PC-3 (cell line): ENCODE measurements at regions of chr11 and their contacts with region 1.

Region 1: DNA sequence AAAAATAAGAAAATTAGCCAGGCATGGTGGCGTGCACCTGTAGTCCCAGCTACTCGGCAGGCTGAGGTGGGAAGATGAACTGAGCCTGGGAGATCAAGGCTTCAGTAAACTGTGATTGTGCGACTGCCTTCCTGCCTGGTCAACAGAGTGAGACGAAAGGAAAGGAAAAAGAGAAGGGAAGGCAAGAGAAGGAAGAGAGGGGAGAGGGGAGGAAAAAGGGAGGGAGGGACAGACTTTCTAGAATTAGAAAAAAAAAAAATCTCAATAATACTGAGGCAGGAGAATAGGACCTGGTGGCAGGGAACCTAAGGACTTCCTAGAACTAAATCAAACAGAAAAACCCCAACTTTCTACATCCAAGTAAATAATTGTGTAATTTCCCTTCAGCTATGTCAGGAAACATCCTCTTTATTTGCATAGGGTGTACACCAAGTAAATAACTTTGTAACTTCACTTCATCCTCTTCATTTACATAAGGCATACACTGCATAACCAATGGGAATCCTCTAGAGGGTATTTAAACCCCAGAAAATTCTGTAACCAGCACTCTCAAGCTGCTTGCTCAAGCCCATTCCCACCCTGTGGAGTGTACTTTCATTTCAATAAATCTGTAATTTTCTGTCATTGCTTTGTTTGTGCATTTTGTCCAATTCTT is 8.7 kb downstream of the SBF2 start:
- DNase-seq: peak; percentile 32
- ATAC-seq: peak; percentile 86
- H3K4me3 ChIP-seq: peak overlapping the region; percentile 11; the same call in 1 of the 2 replicates
- H3K27ac ChIP-seq: no peak overlapping the region
- H3K4me1 ChIP-seq: peaks cover 11% of the 10 kb centered on the region
- H3K27me3 ChIP-seq: no peaks in the 10 kb centered on the region
- CTCF ChIP-seq: no peak

Region 2: DNA sequence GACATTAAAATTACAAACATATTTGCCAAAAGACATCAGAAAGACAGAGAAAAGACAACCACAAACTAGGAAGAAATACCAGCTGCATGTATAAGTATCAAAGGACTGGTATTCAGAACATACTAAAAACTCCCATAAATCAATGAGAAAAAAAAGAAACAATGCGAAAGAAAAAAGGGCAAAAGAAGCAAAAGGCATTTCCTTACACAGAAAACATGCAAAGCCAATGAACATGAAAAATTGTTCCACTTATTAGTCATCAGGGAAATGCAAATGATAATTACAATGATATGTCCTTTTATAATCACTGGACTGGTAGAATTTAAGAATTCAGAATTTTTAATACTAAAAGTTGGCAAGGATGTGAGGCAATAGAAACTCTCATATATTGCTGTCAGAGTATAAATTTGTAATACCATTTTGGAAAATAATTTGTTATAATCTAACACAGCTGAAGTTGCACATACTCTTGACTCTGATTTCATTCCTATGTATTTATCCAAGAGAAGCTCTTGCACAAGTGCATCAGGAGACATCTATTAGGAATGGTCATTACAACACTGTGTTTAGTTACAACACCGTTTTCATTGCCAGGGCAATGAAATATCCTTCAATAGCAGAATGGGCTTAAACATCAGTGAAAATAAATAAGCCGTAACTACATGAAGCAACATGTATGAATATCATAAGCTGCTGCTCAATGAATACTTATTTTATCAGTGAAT is 341.7 kb before region 1 on chr11:
- CTCF ChIA-PET with region 1: no interaction called
- POLR2A ChIA-PET with region 1: no interaction called
- intact Hi-C with region 1: no loop called
- DNase-seq: no peak
- ATAC-seq: no peak
- H3K4me3 ChIP-seq: no peak overlapping the region
- H3K27ac ChIP-seq: no peak overlapping the region
- H3K4me1 ChIP-seq: no peaks in the 10 kb centered on the region
- H3K27me3 ChIP-seq: no peaks in the 10 kb centered on the region
- CTCF ChIP-seq: no peak

Region 3: DNA sequence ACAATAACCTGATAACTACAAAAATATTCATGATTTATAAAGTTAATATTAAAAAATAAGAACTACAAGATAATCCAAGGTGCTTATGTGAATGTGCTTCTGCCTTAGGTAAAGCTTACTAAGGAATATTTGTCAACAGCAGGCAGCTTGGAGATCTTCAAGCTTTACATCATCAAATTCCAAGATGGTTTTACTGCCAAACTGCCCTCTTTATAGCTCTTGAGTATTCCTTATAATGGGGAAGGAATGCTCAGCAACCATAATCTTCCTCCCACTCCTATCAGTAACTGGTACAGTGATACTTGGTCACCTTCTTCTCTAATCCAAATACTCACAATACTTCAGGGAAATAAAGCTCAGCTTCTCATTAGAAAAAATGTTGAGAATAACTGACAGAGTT is 21.3 kb before region 1 on chr11:
- CTCF ChIA-PET with region 1: no interaction called
- POLR2A ChIA-PET with region 1: interaction called, 11 read pairs
- intact Hi-C with region 1: no loop called
- DNase-seq: peak; percentile 34
- ATAC-seq: no peak; the same call in 1 of the 2 replicates
- H3K4me3 ChIP-seq: no peak overlapping the region
- H3K27ac ChIP-seq: no peak overlapping the region
- H3K4me1 ChIP-seq: peaks cover 9% of the 10 kb centered on the region
- H3K27me3 ChIP-seq: no peaks in the 10 kb centered on the region
- CTCF ChIP-seq: no peak

Region 4: DNA sequence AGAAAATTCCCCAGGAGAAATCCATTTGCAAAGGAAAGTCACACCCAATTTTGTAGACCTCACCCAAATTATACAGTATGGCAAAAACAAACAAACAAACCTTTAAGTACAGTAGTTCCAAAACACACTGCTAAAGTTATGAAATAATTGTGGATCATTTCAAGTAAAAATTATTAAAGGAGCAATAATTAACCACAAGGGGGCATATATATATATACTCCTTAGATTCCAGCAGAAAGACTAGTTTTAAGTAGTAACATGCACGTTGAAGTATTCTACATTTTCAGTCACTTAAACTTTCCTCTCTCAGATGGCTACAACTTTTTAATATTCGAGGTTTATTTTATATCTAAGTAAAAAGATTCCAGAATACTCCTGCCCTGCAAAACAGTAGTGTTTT is 228.9 kb after region 1 on chr11:
- CTCF ChIA-PET with region 1: no interaction called
- POLR2A ChIA-PET with region 1: no interaction called
- intact Hi-C with region 1: no loop called
- DNase-seq: peak; percentile 56
- ATAC-seq: no peak
- H3K4me3 ChIP-seq: no peak overlapping the region
- H3K27ac ChIP-seq: no peak overlapping the region
- H3K4me1 ChIP-seq: no peaks in the 10 kb centered on the region
- H3K27me3 ChIP-seq: no peaks in the 10 kb centered on the region
- CTCF ChIP-seq: peak; percentile 65